A673 (cell line): ENCODE measurements at regions of chr7 and their contacts with region 1.

Region 1: GRCh38 chr7:123154231-123154860 is 45.4 kb downstream of the SLC13A1 start:
- DNase-seq: peak; percentile 95
- H3K4me3 ChIP-seq: no peak overlapping the region
- H3K27ac ChIP-seq: peak overlapping the region; percentile 43
- H3K4me1 ChIP-seq: peaks cover 37% of the 10 kb centered on the region
- H3K27me3 ChIP-seq: no peaks in the 10 kb centered on the region
- CTCF ChIP-seq: peak; percentile 89

Region 2: GRCh38 chr7:122550545-122550944 is 603.8 kb before region 1 on chr7:
- CTCF ChIA-PET with region 1: no interaction called
- POLR2A ChIA-PET with region 1: no interaction called
- intact Hi-C with region 1: loop called (anchors 10 kb)
- DNase-seq: no peak
- H3K4me3 ChIP-seq: no peak overlapping the region
- H3K27ac ChIP-seq: no peak overlapping the region
- H3K4me1 ChIP-seq: no peaks in the 10 kb centered on the region
- H3K27me3 ChIP-seq: no peaks in the 10 kb centered on the region
- CTCF ChIP-seq: peak; percentile 37; the same call in 1 of the 2 replicates

Region 3: DNA sequence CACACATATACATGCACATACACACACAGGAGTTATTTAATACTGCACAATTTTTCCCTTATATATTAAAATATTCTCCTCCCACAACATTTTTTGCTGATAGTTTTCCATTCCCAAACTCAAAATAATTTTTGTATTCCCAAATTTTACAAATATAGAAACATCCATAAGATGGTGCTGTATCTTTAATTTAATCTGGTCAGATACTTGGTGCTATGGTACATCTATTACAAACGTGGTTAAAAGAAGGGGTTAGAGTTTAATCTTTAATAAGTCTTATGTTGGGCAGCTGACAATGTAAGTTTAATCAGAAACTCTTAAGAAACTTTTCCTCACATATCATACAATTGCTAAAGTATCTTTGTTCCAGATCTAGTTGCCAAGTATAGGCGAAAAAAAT is 257.8 kb before region 1 on chr7:
- CTCF ChIA-PET with region 1: interaction called, 3 read pairs
- POLR2A ChIA-PET with region 1: no interaction called
- intact Hi-C with region 1: loop called (anchors 1 kb)
- DNase-seq: peak; percentile 52
- H3K4me3 ChIP-seq: no peak overlapping the region
- H3K27ac ChIP-seq: peak overlapping the region; percentile 39
- H3K4me1 ChIP-seq: peaks cover 28% of the 10 kb centered on the region
- H3K27me3 ChIP-seq: no peaks in the 10 kb centered on the region
- CTCF ChIP-seq: peak; percentile 54

Region 4: DNA sequence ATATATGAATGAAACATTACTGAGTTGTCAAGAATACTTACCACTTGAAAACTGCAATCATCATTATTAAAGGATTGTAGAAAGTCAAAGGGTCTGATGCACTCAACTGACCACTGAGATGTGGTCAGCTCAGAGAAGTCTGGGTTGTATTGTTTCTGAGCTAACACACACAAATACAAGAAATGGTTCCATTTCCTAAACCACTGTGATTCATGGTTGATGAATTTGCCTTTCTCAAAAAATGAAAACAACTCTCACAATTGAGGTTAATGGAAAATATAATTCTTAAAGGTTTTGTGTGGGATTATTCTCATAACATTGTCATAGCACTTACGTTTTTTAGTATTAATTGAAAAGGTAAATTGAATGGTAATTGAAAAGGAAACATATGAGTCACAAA is 113.2 kb before region 1 on chr7:
- CTCF ChIA-PET with region 1: no interaction called
- POLR2A ChIA-PET with region 1: no interaction called
- intact Hi-C with region 1: loop called (anchors 1 kb)
- DNase-seq: no peak
- H3K4me3 ChIP-seq: no peak overlapping the region
- H3K27ac ChIP-seq: no peak overlapping the region
- H3K4me1 ChIP-seq: peaks cover 17% of the 10 kb centered on the region
- H3K27me3 ChIP-seq: no peaks in the 10 kb centered on the region
- CTCF ChIP-seq: no peak

Region 5: GRCh38 chr7:123220396-123220795 is 66.0 kb after region 1 on chr7:
- CTCF ChIA-PET with region 1: no interaction called
- POLR2A ChIA-PET with region 1: no interaction called
- intact Hi-C with region 1: no loop called
- DNase-seq: no peak
- H3K4me3 ChIP-seq: no peak overlapping the region
- H3K27ac ChIP-seq: no peak overlapping the region
- H3K4me1 ChIP-seq: no peaks in the 10 kb centered on the region
- H3K27me3 ChIP-seq: no peaks in the 10 kb centered on the region
- CTCF ChIP-seq: no peak